Left ventricle myocardium inferior (tissue), 1 donor: ENCODE measurements at regions of chr9 and their contacts with region 1.

Region 1: GRCh38 chr9:92857235-92857634 is 20.6 kb downstream of the ZNF484 start:
- DNase-seq: no peak
- H3K4me3 ChIP-seq: no peak overlapping the region
- H3K27ac ChIP-seq: no peak overlapping the region
- H3K4me1 ChIP-seq: no peaks in the 10 kb centered on the region
- H3K27me3 ChIP-seq: no peaks in the 10 kb centered on the region
- CTCF ChIP-seq: no peak

Region 2: DNA sequence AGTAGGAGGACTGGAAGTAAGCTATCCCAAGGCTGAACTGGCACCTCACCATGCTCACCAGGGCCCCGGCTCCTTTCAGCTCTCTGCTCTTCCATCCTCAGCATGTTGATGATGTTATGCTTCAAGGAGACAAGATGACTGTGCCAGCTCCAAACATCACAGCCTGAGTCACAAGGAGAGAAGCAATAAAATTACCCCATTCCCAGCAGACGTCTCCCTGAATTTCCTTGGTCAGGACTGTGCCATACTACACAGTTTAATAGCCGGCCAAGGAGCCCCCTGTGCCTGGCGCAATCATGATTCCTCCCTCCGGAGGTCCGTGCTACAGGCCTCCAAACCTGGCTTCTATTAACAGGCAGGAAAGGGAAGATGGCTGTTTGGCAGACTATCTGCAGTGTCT is 856.0 kb before region 1 on chr9:
- intact Hi-C with region 1: no loop called
- DNase-seq: no peak
- H3K4me3 ChIP-seq: no peak overlapping the region
- H3K27ac ChIP-seq: no peak overlapping the region
- H3K4me1 ChIP-seq: no peaks in the 10 kb centered on the region
- H3K27me3 ChIP-seq: peaks cover 54% of the 10 kb centered on the region
- CTCF ChIP-seq: no peak

Region 3: DNA sequence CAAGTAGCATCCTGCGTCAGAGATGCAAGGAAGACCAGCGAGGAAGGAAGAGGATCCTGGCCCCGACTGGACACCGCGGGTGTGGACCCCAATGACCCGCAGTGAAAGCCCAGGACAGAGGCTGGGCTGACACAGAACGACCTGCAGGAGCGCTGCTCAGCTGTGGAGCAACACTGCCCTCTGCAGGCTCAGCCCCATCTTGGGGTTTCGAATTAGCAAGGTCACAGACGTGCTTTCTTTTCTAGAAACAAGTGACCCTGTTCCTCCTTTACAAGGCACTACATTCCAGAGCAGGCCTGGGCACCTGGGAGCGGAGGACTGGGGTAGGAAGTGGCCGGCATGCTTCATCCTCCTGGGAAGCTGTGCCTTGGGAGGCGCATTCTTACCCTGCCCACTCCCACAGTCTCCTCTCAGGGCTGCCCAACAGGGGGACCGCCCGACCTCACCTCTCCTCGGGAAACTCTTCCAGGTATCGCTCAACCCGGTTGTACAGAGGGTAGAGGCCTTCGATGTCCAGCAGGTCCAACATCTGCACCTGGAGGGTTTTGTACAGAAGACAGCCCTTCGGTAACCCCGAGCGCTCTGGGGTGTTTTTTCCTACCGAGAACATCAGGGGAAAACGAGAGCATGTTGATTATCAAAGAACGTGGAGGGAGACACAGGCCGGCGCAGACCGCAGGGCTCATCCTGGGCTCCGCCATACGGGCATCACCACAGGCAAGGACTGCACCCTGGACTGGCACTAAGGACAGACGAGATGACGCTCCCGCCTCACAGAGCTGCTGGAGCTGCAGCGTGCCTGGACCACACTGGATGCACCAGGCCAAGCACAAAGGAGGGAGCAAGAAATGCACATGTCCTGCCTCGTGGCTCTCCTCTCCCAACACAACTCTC is 222.3 kb before region 1 on chr9:
- intact Hi-C with region 1: no loop called
- DNase-seq: peak; percentile 76
- H3K4me3 ChIP-seq: no peak overlapping the region
- H3K27ac ChIP-seq: peak overlapping the region; percentile 63
- H3K4me1 ChIP-seq: peaks cover 18% of the 10 kb centered on the region
- H3K27me3 ChIP-seq: no peaks in the 10 kb centered on the region
- CTCF ChIP-seq: peak; percentile 93

Region 4: GRCh38 chr9:92877531-92878430 is 20.5 kb after region 1 on chr9 and contains the start of gene ZNF484:
- intact Hi-C with region 1: loop called (anchors 2 kb)
- DNase-seq: peak; percentile 96
- H3K4me3 ChIP-seq: peak within 1 kb of the TSS; percentile 76
- H3K27ac ChIP-seq: peak within 1 kb of the TSS; percentile 75
- H3K4me1 ChIP-seq: peaks cover 11% of the 10 kb centered on the region
- H3K27me3 ChIP-seq: no peaks in the 10 kb centered on the region
- CTCF ChIP-seq: no peak
- total RNA-seq, gene ZNF484: 4.9 TPM